ENCODE measurements at regions of chr6 and their contacts with region 1.

Region 1: DNA sequence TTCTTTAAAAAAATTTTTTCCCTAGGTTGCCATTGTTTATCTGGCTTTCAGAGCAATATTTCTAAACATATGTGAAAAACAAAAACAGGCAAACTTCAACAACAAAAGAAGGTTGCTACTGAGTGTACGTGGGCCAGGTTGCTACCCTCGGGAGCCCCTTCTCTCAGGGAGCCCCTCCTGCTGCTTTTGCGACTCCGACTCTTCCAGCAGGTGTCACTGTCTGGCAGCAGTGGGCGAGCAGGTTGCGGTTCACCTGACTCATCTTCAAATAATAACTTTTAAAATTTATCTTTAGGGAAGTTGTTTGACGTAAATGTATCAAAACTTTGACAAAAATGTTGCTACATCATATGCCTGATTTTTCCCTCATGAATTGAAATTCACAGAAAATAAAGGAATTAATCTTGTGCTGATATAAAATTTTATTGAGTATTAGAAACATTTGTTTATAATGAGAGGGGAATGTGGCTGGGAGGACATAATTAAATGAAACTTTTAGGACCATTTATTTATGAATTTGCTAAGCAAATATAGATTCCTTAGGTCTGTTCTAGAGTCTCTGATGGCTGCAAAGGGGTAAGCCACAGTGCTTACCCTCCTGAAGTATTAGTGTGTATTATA is 138.8 kb downstream of the HIVEP1 start:
- DNase-seq: peak; percentile 43
- H3K4me3 ChIP-seq: no peak overlapping the region
- H3K27ac ChIP-seq: peak overlapping the region; percentile 10 to 64 (median 36)
- H3K4me1 ChIP-seq: peaks cover 0 to 12% (median 3%) of the 10 kb centered on the region in 4 donors
- H3K27me3 ChIP-seq: no peaks in the 10 kb centered on the region
- CTCF ChIP-seq: peak; percentile 44 to 75 (median 64)
- EP300 ChIP-seq: no peak
- POLR2A ChIP-seq: no peak

Region 2: DNA sequence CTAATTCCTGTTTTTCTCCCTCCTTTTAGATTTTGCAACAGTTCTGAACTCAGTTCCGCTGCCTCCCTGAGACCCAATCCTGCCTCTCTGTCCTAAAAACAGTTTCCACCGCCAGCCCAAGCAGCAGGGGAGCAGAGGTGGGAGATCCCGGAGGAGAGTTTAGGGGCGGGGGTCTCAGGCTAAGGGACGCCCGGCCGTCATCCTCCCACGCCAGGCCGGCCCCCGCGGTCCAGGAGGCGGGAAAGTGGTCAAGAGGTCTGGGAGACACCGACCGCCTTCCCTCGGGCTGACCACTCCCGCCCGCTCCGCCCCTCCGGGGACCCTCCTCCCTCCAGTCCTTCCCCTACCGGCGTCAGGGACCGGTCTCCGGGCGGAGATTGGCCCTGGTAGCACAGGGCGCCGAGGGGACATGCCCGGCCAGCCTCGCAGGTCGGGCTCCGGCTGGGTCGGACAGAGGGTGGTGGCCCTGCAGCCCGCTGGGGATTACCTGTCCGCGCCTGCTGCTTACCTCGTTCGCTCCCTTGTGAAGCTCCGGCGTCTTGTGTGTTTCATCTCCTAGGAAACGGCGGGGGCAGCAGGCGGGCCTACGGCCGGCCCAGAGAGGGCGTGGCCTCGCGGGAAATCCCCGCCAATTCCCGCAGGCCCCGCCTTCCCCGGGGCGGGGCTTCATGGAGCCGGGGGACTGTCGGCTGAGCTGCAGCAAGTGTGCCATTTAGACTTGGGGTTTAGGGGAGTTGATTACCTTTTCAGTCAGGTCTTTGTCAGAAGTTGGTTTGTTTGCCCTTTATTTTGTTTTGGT is 1312.7 kb before region 1 on chr6 and contains the start of gene MAK:
- in situ Hi-C with region 1: no loop called
- intact Hi-C with region 1: no loop called
- DNase-seq: peak; percentile 88
- H3K4me3 ChIP-seq: peak within 1 kb of the TSS; percentile 37 to 66 (median 54)
- H3K27ac ChIP-seq: peak within 1 kb of the TSS in 2 of 4 donors; percentile 14 to 44
- H3K4me1 ChIP-seq: peaks cover 13 to 22% (median 16%) of the 10 kb centered on the region in 4 donors
- H3K27me3 ChIP-seq: peaks cover 55% of the 10 kb centered on the region
- CTCF ChIP-seq: no peak
- EP300 ChIP-seq: no peak
- POLR2A ChIP-seq: no peak
- total RNA-seq, gene MAK: not detected

Region 3: GRCh38 chr6:12051861-12052368 is 99.0 kb before region 1 on chr6:
- in situ Hi-C with region 1: no loop called
- intact Hi-C with region 1: no loop called
- DNase-seq: peak; percentile 40
- H3K4me3 ChIP-seq: no peak overlapping the region
- H3K27ac ChIP-seq: peak overlapping the region in 3 of 4 donors; percentile 2 to 27 (median 21)
- H3K4me1 ChIP-seq: peaks cover 0 to 16% (median 0%) of the 10 kb centered on the region in 4 donors
- H3K27me3 ChIP-seq: no peaks in the 10 kb centered on the region
- CTCF ChIP-seq: no peak
- EP300 ChIP-seq: no peak
- POLR2A ChIP-seq: no peak

Region 4: DNA sequence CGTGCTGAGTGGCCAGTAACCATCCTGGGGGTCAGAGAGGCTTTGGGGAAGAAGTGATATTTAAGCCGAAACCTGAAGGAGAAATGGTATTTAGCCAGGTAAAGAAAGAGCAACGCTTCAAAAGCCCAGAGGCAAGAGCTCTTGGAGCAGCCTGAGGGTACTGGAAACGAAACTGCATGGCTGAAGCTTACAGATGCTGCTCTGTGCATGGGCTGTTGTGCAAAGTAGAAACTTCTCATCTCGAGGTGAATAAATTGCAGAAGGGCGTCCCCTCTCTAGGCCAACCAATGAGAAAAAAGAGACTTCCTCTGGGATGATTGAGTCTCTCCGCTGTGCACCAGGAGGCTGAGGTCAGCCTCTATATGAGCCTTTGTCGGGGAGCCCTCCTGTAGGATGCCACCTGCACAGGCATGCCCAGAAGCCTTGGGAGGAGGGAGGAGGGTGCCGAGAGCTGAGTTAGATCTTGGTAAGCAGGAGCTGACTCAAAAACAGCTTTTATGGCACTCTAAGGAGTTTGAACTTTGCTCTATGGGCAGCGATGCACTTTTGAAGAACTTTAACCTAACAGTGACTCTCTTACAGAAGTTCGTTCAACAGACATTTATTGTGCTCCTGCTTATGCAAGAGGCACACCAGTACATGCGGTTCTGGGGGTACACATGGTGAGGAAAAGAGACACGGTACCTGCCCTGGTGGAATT is 77.7 kb after region 1 on chr6:
- in situ Hi-C with region 1: loop called in 1 of 4 experiments (anchors 10 kb)
- intact Hi-C with region 1: no loop called
- DNase-seq: peak; percentile 63
- H3K4me3 ChIP-seq: no peak overlapping the region
- H3K27ac ChIP-seq: peak overlapping the region; percentile 56 to 70 (median 64)
- H3K4me1 ChIP-seq: peaks cover under 1 to 24% (median 5%) of the 10 kb centered on the region in 4 donors
- H3K27me3 ChIP-seq: no peaks in the 10 kb centered on the region
- CTCF ChIP-seq: no peak
- EP300 ChIP-seq: no peak
- POLR2A ChIP-seq: no peak